ENCODE measurements at regions of chr14 and their contacts with region 1.

Region 1: GRCh38 chr14:24327303-24327702 is 7.6 kb downstream of the ADCY4 start:
- DNase-seq: no peak
- H3K27ac ChIP-seq: no peak overlapping the region
- CTCF ChIP-seq: no peak

Region 2: DNA sequence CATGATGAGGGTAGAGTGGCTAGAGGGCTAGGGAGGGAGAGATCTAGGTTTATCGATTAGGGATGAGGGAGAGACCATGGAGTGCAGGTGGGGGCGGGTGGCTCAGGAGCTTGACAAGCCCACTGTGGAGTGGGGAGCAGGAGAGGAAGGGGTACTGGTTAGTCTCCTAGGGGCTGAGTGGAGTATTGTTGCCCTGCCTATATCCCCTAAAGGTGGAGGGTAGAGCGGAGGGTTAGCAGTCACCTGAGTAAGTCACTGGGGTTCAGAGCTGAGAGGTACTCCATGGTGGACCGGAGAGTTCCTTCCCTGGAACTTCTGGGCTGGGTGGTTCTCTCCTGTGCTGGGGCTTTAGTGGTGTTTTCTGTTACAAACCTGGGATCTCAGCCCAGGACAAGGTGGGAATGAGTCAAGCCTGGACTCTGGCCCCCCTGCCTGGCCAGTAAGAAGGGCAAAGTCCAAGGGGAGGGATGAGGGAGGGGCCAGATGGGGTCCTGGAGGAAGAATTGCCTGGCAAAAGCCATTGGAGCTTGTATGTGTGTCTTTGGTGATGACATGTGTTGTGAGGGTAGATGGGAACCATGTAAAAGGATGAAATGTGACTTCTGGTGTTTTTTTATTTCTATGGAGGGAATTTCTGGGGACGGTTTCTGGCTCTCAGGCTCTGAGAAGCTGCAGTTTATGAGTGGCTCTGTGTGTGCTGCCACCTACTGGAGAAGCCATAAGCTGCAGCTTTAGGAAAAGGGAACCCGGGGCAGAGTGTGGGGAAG is 19.5 kb before region 1 on chr14 and contains the start of gene CIDEB:
- CTCF ChIA-PET with region 1: interaction called, 11 read pairs
- POLR2A ChIA-PET with region 1: no interaction called
- DNase-seq: peak; percentile 63
- H3K27ac ChIP-seq: peak within 1 kb of the TSS; percentile 98
- CTCF ChIP-seq: peak; percentile 93

Region 3: GRCh38 chr14:24431569-24432258 is 104.4 kb after region 1 on chr14:
- CTCF ChIA-PET with region 1: interaction called, 94 read pairs
- POLR2A ChIA-PET with region 1: interaction called, 3 read pairs
- DNase-seq: peak; percentile 87
- H3K27ac ChIP-seq: peak overlapping the region; percentile 91
- CTCF ChIP-seq: peak; percentile 93

Region 4: GRCh38 chr14:24921903-24922302 is 594.6 kb after region 1 on chr14:
- CTCF ChIA-PET with region 1: no interaction called
- POLR2A ChIA-PET with region 1: no interaction called
- DNase-seq: no peak
- H3K27ac ChIP-seq: no peak overlapping the region
- CTCF ChIP-seq: no peak